Mucosa of descending colon (tissue), 3 donors: ENCODE measurements at regions of chr11 and their contacts with region 1.

Region 1: DNA sequence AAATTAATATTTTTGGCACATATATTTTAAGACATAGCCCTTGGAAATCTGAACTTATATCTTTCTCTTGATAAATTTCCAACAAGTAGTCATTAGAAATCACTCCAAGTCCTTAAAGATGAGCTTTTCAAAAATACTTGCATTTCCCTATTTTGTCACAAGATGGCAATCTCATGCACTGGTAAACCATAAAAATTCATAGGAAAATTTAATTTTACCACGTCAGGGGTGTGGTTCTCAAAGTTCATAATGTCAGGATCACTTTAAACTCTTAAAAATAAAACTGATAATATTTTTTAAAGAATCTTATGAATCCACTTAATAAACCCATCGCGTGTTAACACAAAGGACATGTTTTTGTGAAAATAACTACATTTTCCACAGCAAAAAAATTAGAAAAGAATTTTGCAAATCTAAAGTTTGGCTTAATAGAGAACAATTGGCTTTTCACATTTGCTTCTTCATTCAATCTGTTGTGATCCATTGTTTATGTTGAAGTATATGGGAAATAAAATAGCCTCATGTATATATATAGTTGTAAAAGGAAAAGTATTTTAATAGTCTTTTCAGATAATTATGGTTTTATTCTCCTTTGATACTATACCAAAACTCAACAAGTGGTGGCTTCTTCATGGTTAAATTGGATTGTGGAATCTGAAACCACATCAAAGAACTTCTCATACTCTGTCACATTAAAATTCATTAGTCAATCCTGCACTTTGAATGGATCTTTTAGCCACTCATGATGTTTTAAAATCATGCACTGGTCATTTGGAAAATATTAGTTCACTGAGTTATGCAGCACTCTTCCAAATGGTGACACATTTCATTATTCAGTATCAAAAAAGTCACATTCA is 169.1 kb downstream of the CADM1 start:
- DNase-seq: no peak
- ATAC-seq: no peak
- H3K4me3 ChIP-seq: no peak overlapping the region
- H3K4me1 ChIP-seq: no peaks in the 10 kb centered on the region
- CTCF ChIP-seq: peak; percentile 50

Region 2: GRCh38 chr11:115504276-115505158 is 169.4 kb after region 1 on chr11 and contains the start of gene CADM1:
- intact Hi-C with region 1: loop called (anchors 10 kb)
- DNase-seq: peak; percentile 93 to 95 (median 94)
- ATAC-seq: peak; percentile 97
- H3K4me3 ChIP-seq: peak within 1 kb of the TSS; percentile 2
- H3K4me1 ChIP-seq: peaks cover 20% of the 10 kb centered on the region
- CTCF ChIP-seq: peak; percentile 64
- total RNA-seq, gene CADM1: 4.3 to 20.2 (median 7.2) TPM

Region 3: DNA sequence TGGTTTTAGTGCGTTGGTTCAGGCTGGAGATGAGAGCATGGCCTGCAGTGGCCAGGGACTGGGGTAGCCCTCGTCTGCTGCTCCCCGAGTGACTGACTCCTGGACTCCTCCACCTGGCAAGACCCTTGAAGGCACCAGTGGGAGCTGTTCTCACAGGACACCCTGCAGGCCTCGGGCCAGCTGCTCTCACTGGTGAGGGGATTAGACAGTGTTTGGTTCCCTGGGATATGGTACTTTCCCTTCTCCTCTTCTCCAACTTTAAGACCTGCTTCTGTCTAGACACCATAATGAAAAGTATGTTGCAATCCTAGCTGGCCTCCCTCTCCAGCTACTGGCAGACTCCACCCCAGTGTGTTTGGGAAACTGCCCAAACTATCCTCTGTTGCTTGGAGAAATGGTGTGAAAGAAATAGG is 337.8 kb after region 1 on chr11:
- intact Hi-C with region 1: loop called in 1 of 2 experiments (anchors 10 kb)
- DNase-seq: peak in 1 of 3 donors; percentile 15
- ATAC-seq: peak; percentile 38
- H3K4me3 ChIP-seq: no peak overlapping the region
- H3K4me1 ChIP-seq: no peaks in the 10 kb centered on the region
- CTCF ChIP-seq: no peak

Region 4: DNA sequence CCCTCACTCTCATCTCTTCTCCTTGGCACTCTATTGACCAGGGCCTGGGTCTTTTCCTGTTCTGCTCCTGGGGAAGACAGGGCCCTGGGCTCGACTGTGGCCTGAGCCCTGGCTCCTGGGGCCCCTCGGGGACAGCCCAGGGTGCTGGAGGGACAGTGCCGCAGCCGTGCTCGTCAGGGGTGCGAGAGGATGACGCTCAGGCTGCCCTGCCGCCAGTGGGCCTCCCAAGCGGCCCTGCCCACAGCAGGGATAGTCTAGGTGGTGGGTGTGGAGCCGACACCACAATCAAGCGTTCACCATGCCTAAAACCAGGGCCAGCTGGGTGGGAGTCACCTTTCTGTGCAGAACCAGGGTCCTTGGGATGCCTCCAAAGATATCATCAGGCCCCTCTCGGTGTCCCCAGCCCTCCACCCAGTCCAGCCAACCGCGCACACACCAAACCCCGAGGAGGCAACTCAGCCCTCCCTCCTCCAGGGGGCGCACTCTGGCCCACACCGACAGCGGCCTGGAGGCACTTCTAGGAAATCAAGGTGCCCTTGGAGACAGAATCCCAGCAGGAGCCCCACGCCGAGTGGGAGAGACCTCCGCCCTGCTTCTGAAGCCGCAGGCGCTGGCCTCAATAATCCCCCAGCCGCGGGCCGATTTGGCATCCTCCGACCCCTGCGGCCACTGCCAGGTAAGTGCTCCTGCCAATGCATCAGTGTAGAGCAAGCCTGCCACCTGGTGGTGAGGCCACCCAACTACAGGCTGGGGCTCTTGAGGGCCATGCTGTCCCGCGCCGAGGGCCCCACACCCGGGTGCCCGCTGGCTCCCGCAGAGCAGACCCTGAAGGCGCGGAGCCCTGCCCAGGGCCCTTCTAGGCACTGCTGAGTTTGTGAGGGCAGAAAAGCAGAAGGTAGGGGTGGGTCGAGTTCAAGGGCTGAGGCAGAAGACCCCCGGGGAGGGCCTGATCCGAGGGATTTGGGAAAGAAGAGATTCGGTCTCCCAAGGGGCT is 941.2 kb after region 1 on chr11:
- intact Hi-C with region 1: loop called in 1 of 2 experiments (anchors 10 kb)
- DNase-seq: peak; percentile 81 to 87 (median 84)
- ATAC-seq: peak; percentile 93
- H3K4me3 ChIP-seq: no peak overlapping the region
- H3K4me1 ChIP-seq: no peaks in the 10 kb centered on the region
- CTCF ChIP-seq: peak; percentile 95